ENCODE measurements at regions of chr6 and their contacts with region 1.

Region 1: GRCh38 chr6:29737707-29738630 is 14.7 kb downstream of the HLA-F start:
- DNase-seq: peak; percentile 84
- H3K4me3 ChIP-seq: no peak overlapping the region
- H3K27ac ChIP-seq: no peak overlapping the region
- H3K4me1 ChIP-seq: no peaks in the 10 kb centered on the region
- H3K27me3 ChIP-seq: no peaks in the 10 kb centered on the region
- CTCF ChIP-seq: peak; percentile 60 to 76 (median 62)
- EP300 ChIP-seq: no peak
- POLR2A ChIP-seq: no peak

Region 2: DNA sequence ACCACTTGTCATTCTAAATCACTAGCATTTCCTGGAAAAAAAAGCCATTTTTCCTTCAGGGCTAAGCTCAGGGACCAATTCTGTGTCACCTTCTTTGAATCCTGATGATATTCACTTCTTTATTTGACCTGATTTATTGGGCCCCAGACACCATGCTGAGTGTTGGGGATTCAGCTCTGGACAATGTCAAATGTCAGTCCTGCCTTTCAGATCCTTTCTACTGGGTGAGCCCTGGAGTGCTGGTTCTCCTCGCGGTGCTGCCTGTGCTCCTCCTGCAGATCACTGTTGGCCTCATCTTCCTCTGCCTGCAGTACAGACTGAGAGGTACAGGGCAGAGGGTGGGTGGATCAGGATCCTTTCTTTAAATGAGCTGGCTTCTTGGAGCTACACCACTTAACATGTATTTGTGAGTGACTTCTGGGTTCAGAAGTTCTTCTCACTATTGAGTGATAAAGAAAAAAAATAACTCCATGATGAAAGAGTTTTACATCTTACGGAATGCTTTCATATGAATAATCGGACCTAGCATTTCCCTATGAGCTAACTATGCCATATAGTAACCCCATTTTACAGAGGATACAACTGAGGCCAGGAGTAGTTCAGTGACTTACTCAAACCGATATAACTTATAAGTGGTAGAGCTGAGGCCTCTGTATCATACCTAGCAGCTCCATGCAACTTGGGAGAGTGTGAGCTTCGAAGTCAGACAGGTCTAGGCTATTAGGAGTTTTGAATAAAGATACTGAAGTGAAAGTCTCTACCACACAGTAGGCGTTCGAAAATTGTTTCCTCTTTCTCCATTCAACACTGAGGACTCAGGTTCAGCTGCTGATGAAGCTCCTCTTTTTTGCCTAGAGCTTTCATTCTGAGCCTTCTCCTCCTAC is 71.8 kb before region 1 on chr6:
- intact Hi-C with region 1: no loop called
- DNase-seq: no peak
- H3K4me3 ChIP-seq: no peak overlapping the region
- H3K27ac ChIP-seq: no peak overlapping the region
- H3K4me1 ChIP-seq: no peaks in the 10 kb centered on the region
- H3K27me3 ChIP-seq: peaks cover 6 to 59% (median 9%) of the 10 kb centered on the region in 3 donors
- CTCF ChIP-seq: no peak
- EP300 ChIP-seq: no peak
- POLR2A ChIP-seq: no peak

Region 3: DNA sequence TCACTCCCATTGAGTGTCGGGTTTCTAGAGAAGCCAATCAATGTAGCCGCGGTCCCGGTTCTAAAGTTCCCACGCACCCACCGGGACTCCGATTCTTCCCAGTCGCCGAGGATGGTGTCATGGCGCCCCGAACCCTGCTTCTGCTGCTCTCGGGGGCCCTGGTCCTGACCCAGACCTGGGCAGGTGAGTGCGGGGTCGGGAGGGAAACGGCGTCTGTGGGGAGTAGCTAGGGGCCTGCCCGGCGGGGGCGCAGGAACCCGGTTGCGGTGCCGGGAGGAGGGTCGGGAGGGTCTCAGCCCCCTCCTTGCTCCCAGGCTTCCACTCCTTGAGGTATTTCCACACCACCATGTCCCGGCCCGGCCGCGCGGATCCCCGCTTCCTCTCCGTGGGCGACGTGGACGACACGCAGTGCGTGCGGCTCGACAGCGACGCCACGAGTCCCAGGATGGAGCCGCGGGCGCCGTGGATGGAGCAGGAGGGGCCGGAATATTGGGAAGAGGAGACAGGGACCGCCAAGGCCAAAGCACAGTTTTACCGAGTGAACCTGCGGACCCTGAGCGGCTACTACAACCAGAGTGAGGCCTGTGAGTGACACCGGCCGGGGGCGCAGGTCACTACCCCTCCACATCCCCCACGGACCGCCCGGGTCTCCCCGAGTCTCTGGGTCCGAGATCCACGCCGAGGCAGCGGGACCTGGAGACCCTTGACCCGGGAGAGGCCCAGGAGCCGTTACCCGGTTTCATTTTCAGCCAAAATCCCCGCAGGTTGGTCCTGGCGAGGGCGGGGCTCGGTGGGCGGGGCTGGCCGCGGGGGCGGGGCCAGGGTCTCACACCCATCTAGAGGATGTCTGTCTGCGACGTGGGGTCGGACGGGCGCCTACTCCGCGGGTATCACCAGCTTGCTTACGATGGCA is 54.4 kb after region 1 on chr6:
- intact Hi-C with region 1: loop called (anchors 10 kb)
- DNase-seq: peak; percentile 84
- H3K4me3 ChIP-seq: peak overlapping the region; percentile 43 to 63 (median 51)
- H3K27ac ChIP-seq: peak overlapping the region in 2 of 4 donors; percentile 43 to 51
- H3K4me1 ChIP-seq: peaks cover 0 to 18% (median 14%) of the 10 kb centered on the region in 4 donors
- H3K27me3 ChIP-seq: peaks cover 0 to 34% (median 0%) of the 10 kb centered on the region in 3 donors
- CTCF ChIP-seq: peak; percentile 21 to 72 (median 32)
- EP300 ChIP-seq: no peak
- POLR2A ChIP-seq: no peak

Region 4: DNA sequence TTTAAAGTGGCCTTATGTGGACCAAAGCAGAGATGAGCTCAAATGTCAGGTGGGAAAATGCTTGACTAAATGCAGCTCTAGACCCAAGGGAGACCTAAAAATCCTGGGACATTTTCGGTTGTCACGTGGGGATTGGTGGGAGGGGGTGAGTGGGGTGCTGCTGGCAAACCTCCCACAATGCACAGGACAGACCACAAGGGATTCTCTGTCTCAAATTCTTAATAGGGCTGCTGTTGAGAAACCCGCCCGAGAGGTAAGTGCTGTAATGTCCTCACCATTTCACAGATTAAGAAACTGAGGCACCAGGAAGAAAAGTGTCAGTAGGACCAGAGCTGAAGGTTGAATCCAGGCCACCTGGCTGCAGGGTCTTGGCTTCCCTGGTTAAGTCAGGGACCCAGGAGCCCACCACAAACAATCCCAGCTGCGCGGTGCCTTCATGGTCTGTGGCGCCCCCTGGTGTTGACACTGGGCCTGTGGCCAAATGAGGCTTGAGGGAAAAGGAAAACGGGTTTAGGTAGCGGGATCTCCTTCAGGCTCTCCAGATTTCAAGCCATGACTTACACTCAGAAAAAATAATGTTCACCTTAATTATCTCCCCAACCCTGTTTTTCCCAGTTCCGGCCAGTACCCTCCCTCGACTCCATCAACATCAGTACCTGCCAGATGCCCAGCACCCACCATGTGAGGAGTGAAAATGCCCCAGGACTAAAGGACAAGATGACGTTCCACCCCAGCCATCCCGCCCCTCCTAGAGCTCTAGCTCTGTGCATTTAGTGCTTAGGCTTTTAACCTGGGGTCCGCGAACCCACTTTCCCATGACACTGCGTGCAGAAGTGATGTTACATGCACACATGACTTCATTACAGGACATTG is 96.8 kb after region 1 on chr6:
- intact Hi-C with region 1: loop called (anchors 2 kb)
- DNase-seq: no peak
- H3K4me3 ChIP-seq: no peak overlapping the region
- H3K27ac ChIP-seq: no peak overlapping the region
- H3K4me1 ChIP-seq: no peaks in the 10 kb centered on the region
- H3K27me3 ChIP-seq: peaks cover 0 to 51% (median 6%) of the 10 kb centered on the region in 3 donors
- CTCF ChIP-seq: peak in 3 of 4 experiments; percentile 48 to 79 (median 63)
- EP300 ChIP-seq: no peak
- POLR2A ChIP-seq: no peak

Region 5: GRCh38 chr6:29955783-29956182 is 217.8 kb after region 1 on chr6:
- intact Hi-C with region 1: no loop called
- DNase-seq: no peak
- H3K4me3 ChIP-seq: no peak overlapping the region
- H3K27ac ChIP-seq: no peak overlapping the region
- H3K4me1 ChIP-seq: peaks cover 0 to 11% (median 0%) of the 10 kb centered on the region in 4 donors
- H3K27me3 ChIP-seq: no peaks in the 10 kb centered on the region
- CTCF ChIP-seq: no peak
- EP300 ChIP-seq: no peak
- POLR2A ChIP-seq: no peak

Measured in sigmoid colon (tissue), 7 donors.